OCI-LY7 (cell line): ENCODE measurements at regions of chr6 and their contacts with region 1.

Region 1: DNA sequence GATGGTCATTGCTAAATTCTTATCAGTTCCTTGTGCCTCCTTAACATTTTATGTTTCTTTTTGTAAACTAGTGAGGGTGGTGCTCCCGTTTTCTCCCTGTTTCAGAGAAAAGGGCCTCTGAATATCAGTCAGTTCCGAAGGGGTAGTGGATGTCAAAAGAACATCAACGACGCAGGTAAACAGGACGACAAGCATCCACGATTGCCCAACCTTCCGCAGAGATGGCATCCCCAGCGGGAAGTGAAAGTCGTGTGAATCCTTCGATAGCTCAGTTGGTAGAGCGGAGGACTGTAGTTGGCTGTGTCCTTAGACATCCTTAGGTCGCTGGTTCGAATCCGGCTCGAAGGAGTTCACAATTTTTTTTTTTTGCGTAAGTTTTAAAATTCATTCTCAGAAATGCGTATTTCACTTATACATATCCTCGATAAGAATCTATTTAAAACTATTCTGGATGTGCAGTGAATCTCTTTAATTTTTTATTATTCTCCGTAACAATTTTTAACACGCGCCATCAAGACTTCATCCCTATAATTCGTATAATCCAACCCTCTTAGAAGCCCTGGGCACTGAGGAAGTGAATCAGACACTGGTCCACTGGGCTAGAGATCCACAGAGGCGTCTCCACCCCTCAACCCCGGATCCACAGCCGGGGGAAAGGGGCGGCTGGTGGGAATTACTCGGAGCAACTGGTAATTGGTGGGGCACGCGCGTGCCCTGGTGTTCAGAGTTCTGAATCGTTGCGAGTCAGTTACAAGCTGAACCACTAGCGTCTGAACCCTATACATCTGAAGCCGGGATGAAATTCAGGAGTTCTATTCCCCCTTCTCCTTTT is 27.9 kb upstream of the ABT1 start:
- DNase-seq: peak; percentile 92
- H3K4me3 ChIP-seq: peak overlapping the region; percentile 82
- H3K27ac ChIP-seq: peak overlapping the region; percentile 29
- H3K4me1 ChIP-seq: peaks cover 24% of the 10 kb centered on the region
- CTCF ChIP-seq: peak; percentile 23; the same call in 1 of the 2 replicates

Region 2: DNA sequence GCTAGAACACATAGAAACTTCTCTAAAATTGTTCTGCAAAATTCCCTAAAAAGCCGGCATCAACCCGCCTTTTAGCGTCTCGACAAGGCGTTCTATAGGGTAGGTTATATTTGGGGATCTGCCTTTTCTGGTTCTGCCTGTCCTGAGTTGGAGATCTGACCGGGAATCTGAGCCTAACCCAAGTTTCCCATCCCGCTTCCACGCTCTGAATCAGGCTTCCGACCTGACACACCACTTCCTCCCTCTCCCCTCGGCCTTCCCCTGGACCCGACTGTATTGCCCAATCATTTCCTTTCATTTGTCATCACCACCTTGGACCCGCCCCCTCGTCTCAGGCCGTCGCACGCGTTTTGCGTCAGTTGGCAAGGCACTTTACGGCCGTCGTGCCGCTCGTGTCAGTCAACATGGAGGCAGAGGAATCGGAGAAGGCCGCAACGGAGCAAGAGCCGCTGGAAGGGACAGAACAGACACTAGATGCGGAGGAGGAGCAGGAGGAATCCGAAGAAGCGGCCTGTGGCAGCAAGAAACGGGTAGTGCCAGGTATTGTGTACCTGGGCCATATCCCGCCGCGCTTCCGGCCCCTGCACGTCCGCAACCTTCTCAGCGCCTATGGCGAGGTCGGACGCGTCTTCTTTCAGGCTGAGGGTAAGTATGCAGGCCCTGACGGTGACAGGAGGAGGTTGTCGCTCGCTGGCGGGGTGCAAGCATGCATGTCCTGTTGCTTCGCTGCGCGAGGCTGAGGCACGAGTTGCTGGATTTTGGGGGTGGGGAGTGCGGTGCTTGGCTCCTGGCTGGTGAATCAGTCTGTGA is 28.0 kb after region 1 on chr6 and contains the start of gene ABT1:
- CTCF ChIA-PET with region 1: no interaction called
- POLR2A ChIA-PET with region 1: interaction called, 3 read pairs
- intact Hi-C with region 1: loop called (anchors 1 kb)
- DNase-seq: peak; percentile 97
- H3K4me3 ChIP-seq: peak within 1 kb of the TSS; percentile 91
- H3K27ac ChIP-seq: peak within 1 kb of the TSS; percentile 60
- H3K4me1 ChIP-seq: peaks cover 30% of the 10 kb centered on the region
- CTCF ChIP-seq: no peak
- total RNA-seq, gene ABT1: 32.2 and 34.6 TPM in 2 replicates